IMR-90 (cell line): ENCODE measurements at regions of chr2 and their contacts with region 1.

Region 1: DNA sequence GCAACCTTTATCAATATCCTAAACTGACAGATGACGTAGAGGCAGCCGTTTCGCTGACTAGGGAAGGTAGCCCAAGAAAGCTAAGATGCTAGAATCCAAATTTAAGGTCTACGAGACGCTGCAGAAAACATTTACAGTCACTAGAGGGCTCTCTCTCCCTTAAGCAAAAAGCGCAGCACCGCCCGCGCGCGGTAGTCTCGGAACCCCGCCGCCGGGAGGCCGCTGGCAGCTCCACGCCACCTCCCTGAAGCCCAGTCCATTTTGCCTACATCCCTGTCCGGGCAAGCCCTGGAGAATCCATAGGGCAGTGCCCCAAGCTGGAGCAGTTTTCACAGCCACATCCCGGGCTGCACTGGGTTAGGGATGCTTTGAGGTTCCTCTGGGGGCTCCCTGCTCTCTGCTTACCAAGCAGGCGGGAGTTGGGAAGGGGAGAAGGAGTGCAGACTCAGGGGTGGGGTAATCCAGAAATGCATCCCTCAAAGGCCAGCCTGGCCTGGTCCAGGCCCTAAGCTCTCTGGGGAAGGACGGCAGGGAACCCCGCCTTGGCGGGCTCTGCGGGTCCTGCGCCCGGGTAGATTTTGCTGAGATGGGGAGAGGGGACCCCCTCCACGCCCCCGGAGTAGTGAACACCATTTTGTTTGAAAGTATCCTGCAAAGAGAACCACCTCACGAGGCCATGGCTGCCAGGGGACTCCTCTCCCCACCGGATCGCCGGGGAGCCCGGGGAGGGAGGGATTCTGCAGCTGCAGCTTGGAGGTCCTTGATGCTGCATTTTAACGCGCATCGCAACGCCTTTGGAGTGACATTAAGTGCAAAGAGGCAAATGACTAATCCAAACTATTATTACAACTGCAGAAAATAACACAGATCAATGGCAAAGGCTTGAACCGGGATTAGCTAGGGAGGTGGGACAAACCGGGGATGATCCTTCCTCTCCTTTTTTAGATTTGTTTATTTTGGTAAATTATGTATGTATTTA is 1.3 kb upstream of the DPYSL5 start:
- DNase-seq: peak; percentile 69
- ATAC-seq: peak; percentile 93
- H3K4me3 ChIP-seq: no peak overlapping the region
- H3K27ac ChIP-seq: no peak overlapping the region
- H3K4me1 ChIP-seq: no peaks in the 10 kb centered on the region
- H3K27me3 ChIP-seq: peaks cover 81% of the 10 kb centered on the region
- CTCF ChIP-seq: peak; percentile 92
- POLR2A ChIP-seq: no peak
- RAD21 ChIP-seq: peak; percentile 84

Region 2: GRCh38 chr2:26942543-26943295 is 96.1 kb after region 1 on chr2:
- CTCF ChIA-PET with region 1: interaction called, 47 read pairs
- POLR2A ChIA-PET with region 1: no interaction called
- dilution Hi-C with region 1: no loop called
- in situ Hi-C with region 1: no loop called
- intact Hi-C with region 1: loop called (anchors 1 kb)
- DNase-seq: peak; percentile 48
- ATAC-seq: peak; percentile 63
- H3K4me3 ChIP-seq: no peak overlapping the region
- H3K27ac ChIP-seq: no peak overlapping the region
- H3K4me1 ChIP-seq: peaks cover 2% of the 10 kb centered on the region; the same call in 1 of the 2 replicates
- H3K27me3 ChIP-seq: peaks cover 46% of the 10 kb centered on the region
- CTCF ChIP-seq: peak; percentile 75
- POLR2A ChIP-seq: no peak
- RAD21 ChIP-seq: peak; percentile 72

Region 3: GRCh38 chr2:27086090-27086723 is 239.6 kb after region 1 on chr2:
- CTCF ChIA-PET with region 1: interaction called, 3 read pairs
- POLR2A ChIA-PET with region 1: no interaction called
- dilution Hi-C with region 1: no loop called
- in situ Hi-C with region 1: no loop called
- intact Hi-C with region 1: loop called (anchors 5 kb)
- DNase-seq: peak; percentile 86
- ATAC-seq: peak; percentile 87
- H3K4me3 ChIP-seq: peak overlapping the region; percentile 40
- H3K27ac ChIP-seq: peak overlapping the region; percentile 64
- H3K4me1 ChIP-seq: peaks cover 8% of the 10 kb centered on the region
- H3K27me3 ChIP-seq: no peaks in the 10 kb centered on the region
- CTCF ChIP-seq: peak; percentile 93
- POLR2A ChIP-seq: no peak
- RAD21 ChIP-seq: peak; percentile 53